Vagina (tissue), 2 donors: ENCODE measurements at regions of chr3 and their contacts with region 1.

Region 1: DNA sequence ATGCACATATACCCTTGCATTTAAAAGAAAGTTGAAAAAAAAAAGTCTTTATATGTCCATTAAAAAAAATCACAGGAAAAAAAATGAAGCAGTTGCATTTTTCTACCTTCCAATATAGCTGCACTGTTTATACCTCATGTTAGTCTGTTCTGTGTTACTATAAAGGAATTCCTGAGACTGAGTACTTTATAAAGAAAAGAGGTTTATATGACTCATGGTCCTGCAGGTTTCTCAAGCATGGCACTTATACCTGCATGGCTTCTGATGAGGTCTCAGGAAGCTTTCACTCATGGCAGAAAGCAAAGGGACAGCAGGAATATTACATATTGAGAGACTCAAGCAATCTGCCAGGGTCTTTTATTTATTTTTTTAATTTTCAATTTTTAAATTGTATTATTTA is 277.2 kb upstream of the BCHE start:
- DNase-seq: no peak
- H3K4me3 ChIP-seq: no peak overlapping the region
- H3K27ac ChIP-seq: no peak overlapping the region
- H3K4me1 ChIP-seq: no peaks in the 10 kb centered on the region
- H3K27me3 ChIP-seq: no peaks in the 10 kb centered on the region
- CTCF ChIP-seq: no peak
- POLR2A ChIP-seq: no peak

Region 2: DNA sequence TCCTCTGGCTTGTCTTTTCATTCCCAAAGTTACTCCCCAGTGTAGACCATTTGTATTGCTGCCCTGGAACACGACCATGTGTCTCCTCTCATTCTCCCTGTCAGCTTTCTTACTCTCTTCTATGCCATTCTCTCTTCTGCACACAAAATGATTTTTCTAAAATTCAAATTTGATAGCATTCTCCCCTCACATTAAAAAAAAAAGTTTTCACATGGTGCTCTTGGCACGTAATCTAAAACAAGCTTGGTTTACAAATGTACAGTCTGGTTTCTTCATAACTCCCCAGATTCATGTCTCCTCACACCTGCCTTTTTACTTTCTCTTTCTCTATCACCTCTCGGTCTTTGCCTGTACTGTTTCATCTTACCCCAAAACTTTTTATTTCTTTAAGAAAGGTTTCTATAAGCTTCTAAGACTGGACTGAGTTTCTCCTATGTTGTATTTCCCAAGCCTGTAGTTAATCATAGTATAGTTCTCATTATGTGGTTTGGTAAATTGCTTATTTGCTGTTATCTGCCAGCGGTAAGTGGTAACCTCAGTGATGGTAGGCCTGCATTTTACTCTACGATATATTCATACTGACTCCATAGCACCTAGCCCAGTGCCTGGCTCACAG is 308.4 kb before region 1 on chr3:
- intact Hi-C with region 1: no loop called
- DNase-seq: no peak
- H3K4me3 ChIP-seq: peak overlapping the region in 1 of 2 donors; percentile 2
- H3K27ac ChIP-seq: no peak overlapping the region
- H3K4me1 ChIP-seq: no peaks in the 10 kb centered on the region
- H3K27me3 ChIP-seq: no peaks in the 10 kb centered on the region
- CTCF ChIP-seq: no peak
- POLR2A ChIP-seq: no peak

Region 3: GRCh38 chr3:166060789-166061479 is 53.5 kb before region 1 on chr3:
- intact Hi-C with region 1: loop called (anchors 10 kb)
- DNase-seq: no peak
- H3K4me3 ChIP-seq: no peak overlapping the region
- H3K27ac ChIP-seq: no peak overlapping the region
- H3K4me1 ChIP-seq: no peaks in the 10 kb centered on the region
- H3K27me3 ChIP-seq: no peaks in the 10 kb centered on the region
- CTCF ChIP-seq: no peak
- POLR2A ChIP-seq: no peak

Region 4: DNA sequence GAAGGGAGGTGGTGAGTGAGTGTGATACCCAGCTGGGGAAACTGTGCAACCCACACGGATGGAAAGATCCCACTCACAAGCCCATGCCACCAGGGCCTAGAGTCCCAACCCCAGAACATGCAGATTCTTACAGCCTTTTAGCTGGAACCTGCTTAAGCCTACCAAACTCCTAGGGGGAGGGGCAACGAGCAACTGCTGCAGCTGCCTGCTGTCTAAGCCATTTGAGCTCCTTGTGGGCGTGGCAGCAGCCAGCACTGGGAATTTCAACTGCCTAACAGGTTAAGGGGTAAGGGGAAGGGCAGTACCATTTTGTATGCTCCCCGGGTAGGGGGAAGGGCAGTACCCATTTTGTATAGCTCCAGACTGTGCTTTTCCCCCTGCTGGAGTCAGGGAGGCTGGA is 395.9 kb after region 1 on chr3:
- intact Hi-C with region 1: no loop called
- DNase-seq: no peak
- H3K4me3 ChIP-seq: no peak overlapping the region
- H3K27ac ChIP-seq: no peak overlapping the region
- H3K4me1 ChIP-seq: no peaks in the 10 kb centered on the region
- H3K27me3 ChIP-seq: no peaks in the 10 kb centered on the region
- CTCF ChIP-seq: no peak
- POLR2A ChIP-seq: no peak